ENCODE measurements at regions of chr15 and their contacts with region 1.

Region 1: GRCh38 chr15:70513819-70514218 is 249.5 kb downstream of the UACA start:
- DNase-seq: no peak
- H3K4me3 ChIP-seq: no peak overlapping the region
- H3K27ac ChIP-seq: no peak overlapping the region
- H3K4me1 ChIP-seq: peaks cover 0 to 3% (median 0%) of the 10 kb centered on the region in 4 donors
- H3K27me3 ChIP-seq: peaks cover 0 to 7% of the 10 kb centered on the region in 2 donors
- CTCF ChIP-seq: no peak

Region 2: GRCh38 chr15:70385072-70385535 is 128.7 kb before region 1 on chr15:
- intact Hi-C with region 1: no loop called
- DNase-seq: no peak
- H3K4me3 ChIP-seq: no peak overlapping the region
- H3K27ac ChIP-seq: no peak overlapping the region
- H3K4me1 ChIP-seq: no peaks in the 10 kb centered on the region
- H3K27me3 ChIP-seq: no peaks in the 10 kb centered on the region
- CTCF ChIP-seq: no peak

Region 3: DNA sequence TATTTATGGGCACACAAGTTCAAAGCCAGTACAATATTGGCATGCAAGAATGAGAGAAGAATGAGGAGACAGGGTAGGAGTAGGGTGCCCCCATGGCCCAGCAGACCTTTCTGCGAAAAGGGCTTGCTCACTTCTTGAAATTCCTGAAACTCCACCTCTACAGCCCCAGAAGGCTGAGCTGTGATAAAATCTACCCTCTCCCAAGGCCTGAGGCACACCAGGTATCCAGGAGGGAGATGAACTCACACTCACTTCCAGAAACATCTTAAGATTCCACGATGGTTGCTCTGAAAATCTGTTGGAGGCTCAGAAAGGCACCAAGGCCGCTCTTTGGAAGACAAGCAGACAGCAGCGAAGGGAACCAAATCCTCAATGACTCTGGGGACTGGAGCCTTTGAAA is 48.0 kb before region 1 on chr15:
- intact Hi-C with region 1: loop called (anchors 2 kb)
- DNase-seq: no peak
- H3K4me3 ChIP-seq: no peak overlapping the region
- H3K27ac ChIP-seq: no peak overlapping the region
- H3K4me1 ChIP-seq: no peaks in the 10 kb centered on the region
- H3K27me3 ChIP-seq: no peaks in the 10 kb centered on the region
- CTCF ChIP-seq: no peak

Region 4: DNA sequence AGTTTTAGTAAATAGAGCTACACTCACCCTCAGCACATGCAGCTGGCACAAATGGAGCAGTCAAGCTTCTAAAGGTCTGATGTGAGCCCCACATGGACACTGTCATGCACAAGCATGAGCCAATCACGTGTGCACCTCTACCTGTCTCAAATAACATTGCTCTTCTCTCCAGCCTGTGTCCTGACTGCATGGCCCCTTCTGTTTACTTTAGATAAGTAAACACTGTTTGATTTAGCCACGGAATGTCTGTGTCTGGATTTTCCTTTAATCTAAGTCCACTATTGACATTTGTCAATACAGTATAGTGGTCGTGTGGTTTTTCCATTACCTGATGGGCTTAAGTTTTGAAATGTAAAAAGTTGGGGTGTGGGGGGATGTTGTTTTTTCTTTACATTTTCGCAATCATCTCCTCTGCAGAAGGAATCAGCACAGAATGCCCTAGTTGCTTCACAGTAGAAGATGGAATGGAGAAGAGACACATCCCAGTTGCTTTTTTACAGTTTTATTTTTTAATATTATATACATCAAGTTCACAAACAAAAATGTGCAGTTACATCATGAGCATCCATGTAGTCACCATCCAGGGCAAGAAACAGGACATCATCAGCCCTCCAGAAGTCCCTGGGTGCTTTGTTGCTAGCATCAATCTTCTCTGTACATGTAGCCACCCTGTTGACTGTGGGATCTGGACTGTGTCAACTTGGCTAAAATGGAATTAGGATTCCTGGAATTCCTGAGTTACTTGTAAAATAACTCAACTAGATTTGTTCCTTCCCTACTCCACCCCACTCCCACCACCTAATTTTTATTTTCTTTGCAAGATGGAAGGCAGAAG is 103.5 kb after region 1 on chr15:
- intact Hi-C with region 1: no loop called
- DNase-seq: no peak
- H3K4me3 ChIP-seq: no peak overlapping the region
- H3K27ac ChIP-seq: no peak overlapping the region
- H3K4me1 ChIP-seq: peaks cover 0 to 5% (median 0%) of the 10 kb centered on the region in 4 donors
- H3K27me3 ChIP-seq: no peaks in the 10 kb centered on the region
- CTCF ChIP-seq: no peak

Measured in tibial artery (tissue), 4 donors.